Right lobe of liver (tissue), 6 donors: ENCODE measurements at regions of chr3 and their contacts with region 1.

Region 1: GRCh38 chr3:128497387-128498126 is 4.6 kb upstream of the GATA2 start:
- DNase-seq: peak; percentile 63 to 72 (median 69)
- ATAC-seq: peak; percentile 64 to 81 (median 76)
- H3K4me3 ChIP-seq: peak overlapping the region; percentile 25 to 57 (median 50)
- H3K27ac ChIP-seq: no peak overlapping the region
- H3K4me1 ChIP-seq: peaks cover 0 to 17% (median 5%) of the 10 kb centered on the region in 4 donors
- H3K27me3 ChIP-seq: peaks cover under 1 to 28% of the 10 kb centered on the region in 2 donors
- CTCF ChIP-seq: peak; percentile 49 to 85 (median 56)
- POLR2A ChIP-seq: no peak

Region 2: DNA sequence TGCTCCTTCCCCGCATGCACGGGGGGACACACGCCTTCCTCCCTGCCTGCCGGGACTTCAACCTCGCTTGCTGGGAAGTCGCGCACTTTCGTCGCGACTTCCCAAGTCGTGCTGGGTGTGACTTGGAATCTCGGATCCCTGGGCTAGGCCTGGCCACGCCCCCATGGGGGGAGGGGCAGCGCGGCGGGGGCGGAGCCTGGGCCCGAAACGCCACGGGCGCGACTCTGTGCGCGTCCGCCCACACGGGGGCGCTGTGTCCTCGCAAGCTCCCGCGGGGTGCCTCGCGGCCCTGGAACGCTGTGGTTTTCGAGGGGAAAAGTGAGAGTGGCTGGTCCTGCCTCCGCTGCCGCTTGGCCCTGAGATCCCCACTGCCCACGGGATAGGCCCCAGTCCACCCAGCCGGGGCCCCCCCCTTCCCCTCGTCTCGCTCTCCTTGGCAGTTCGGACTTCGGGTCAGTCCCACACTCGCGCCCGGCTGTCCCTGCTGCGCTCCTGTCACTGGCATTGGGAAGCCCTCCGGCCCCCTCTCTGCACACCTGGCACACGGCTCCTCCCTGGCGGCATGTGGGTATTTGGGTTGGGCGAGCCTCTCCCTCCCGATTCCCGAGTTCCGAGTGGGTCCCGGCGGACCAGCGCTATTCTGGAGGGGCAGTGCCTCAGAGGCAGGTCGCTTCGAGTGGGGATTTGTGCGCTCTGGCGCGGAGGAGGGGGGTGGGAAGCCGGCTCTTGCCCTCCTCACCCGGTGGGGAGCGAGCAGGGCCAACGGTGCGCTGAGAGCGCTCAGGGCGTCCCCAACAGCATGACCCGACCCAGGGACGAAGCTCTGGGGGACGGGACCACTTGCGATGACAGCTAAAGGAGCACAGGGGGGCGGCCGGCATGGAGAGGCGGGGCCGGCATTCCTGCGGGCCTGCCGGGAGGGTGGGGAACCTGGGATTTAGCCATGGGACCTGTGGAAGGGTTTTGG is 421.8 kb before region 1 on chr3:
- intact Hi-C with region 1: loop called in 1 of 2 experiments (anchors 10 kb)
- DNase-seq: peak; percentile 91 to 93 (median 91)
- ATAC-seq: peak; percentile 85 to 92 (median 89)
- H3K4me3 ChIP-seq: peak overlapping the region; percentile 39 to 45 (median 40)
- H3K27ac ChIP-seq: peak overlapping the region; percentile 6 to 38 (median 32)
- H3K4me1 ChIP-seq: peaks cover 0 to 50% (median 22%) of the 10 kb centered on the region in 4 donors
- H3K27me3 ChIP-seq: no peaks in the 10 kb centered on the region
- CTCF ChIP-seq: peak; percentile 95 to 100 (median 99)
- POLR2A ChIP-seq: peak; percentile 6

Region 3: DNA sequence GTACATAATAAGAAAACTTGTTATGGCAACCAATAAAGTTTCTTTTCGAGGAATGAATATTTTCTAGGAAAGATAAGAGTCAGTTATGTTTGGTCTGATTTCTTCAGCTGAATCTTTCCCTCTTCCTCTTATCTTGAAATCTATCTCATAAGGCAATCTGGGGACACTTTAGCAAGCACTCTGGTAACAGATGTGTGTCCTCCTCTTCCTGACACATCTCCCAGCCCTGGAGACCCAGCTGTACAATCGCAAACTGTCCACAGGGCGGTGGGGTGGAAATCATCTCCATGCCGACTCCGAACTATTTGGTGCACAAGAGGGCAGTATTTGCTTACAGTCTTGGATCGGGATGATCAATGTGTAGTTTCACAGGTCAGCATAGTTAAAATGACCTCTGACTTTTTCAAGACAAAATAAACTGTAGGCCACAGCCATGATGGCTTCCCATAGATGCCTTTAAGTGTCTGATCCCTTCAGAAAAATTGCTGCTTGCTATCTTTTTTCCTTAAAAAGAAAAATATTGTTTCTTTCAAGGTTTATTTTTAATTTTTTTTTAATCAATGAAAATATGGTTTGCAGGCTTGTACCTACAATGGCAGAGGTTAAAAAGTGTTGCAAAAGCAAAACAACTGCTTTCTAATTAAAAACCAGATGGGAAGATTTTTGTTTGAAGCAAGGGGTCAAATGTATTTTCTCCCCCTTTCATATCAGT is 326.6 kb before region 1 on chr3:
- intact Hi-C with region 1: loop called in 1 of 2 experiments (anchors 5 kb)
- DNase-seq: peak in 2 of 3 donors; percentile 55 to 68
- ATAC-seq: peak; percentile 81 to 89 (median 83)
- H3K4me3 ChIP-seq: no peak overlapping the region
- H3K27ac ChIP-seq: no peak overlapping the region
- H3K4me1 ChIP-seq: peaks cover 0 to 40% (median 22%) of the 10 kb centered on the region in 4 donors
- H3K27me3 ChIP-seq: no peaks in the 10 kb centered on the region
- CTCF ChIP-seq: peak; percentile 76 to 82 (median 80)
- POLR2A ChIP-seq: no peak

Region 4: GRCh38 chr3:128426128-128426921 is 71.2 kb before region 1 on chr3:
- intact Hi-C with region 1: loop called in 1 of 2 experiments (anchors 5 kb)
- DNase-seq: peak; percentile 57 to 67 (median 61)
- ATAC-seq: peak; percentile 92 to 97 (median 95)
- H3K4me3 ChIP-seq: peak overlapping the region in 2 of 3 donors; percentile 10 to 42
- H3K27ac ChIP-seq: no peak overlapping the region
- H3K4me1 ChIP-seq: peaks cover 0 to 8% (median 0%) of the 10 kb centered on the region in 4 donors
- H3K27me3 ChIP-seq: no peaks in the 10 kb centered on the region
- CTCF ChIP-seq: peak; percentile 81 to 98 (median 90)
- POLR2A ChIP-seq: no peak

Region 5: DNA sequence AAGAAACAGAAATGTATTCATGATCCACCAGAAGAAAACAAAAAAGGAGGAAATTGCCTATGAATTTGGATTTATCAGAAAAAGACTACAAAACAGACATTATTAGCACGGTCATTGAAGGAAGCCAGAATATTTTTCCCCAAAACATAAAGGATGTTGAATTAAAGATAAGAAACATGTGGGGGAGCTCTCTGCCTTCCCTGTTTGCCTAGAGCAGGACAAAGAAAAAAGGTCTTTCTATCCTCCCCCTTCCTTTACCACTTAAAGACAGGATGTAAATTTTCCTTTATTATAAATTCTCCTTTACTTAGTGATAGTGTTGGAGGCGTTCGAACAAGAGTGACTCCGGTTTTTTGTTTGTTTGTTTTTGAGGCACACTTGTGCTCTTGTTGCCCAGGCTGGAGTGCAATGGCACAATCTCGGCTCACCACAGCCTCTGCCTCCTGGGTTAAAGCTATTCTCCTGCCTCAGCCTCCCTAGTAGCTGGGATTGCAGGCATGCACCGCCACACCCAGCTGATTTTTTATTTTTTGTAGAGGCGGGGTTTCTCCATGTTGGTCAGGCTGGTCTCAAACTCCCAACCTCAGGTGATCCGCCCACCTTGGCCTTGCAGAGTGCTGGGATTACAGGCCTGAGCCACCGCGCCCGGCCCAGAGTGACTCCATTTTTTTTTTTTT is 167.9 kb after region 1 on chr3:
- intact Hi-C with region 1: no loop called
- DNase-seq: no peak
- ATAC-seq: peak in 2 of 4 donors; percentile 30 to 53
- H3K4me3 ChIP-seq: no peak overlapping the region
- H3K27ac ChIP-seq: no peak overlapping the region
- H3K4me1 ChIP-seq: no peaks in the 10 kb centered on the region
- H3K27me3 ChIP-seq: no peaks in the 10 kb centered on the region
- CTCF ChIP-seq: peak in 1 of 4 donors; percentile 17
- POLR2A ChIP-seq: no peak